ENCODE measurements at regions of chr5 and their contacts with region 1.

Region 1: DNA sequence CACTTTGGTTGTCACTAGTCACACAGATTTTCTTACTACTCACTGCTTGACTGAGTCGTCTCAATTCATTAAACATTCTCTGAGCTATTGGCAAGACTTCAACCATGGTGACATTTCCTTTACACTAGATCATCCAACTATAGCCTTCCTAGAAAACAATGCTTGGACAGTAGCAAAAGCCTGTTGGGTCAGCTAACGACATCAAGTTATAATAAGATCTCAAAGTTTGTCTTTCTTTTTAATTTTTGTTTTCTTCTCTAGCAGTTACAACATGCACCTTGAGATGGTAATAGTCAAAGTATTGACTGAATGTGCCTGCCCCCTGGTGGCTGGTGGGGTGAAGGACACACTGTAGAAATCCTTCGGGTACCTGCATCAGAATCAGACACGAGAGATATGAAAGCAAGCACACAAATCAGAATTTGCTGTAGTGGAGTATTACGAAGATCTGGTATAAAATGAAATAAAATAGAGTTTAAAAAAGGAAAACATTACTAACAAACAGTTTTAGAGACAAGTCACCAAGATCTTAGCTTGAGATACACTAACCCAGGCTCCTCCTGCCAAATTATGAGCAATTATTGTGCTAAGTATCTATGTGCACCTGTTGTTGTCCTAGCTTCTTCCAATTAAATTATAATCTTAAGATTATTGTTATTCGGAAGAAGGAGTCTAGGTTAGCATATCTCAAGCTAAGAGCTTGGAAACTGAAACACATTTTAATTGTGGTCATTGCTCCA is 81.2 kb downstream of the ARL15 start:
- DNase-seq: no peak
- H3K4me3 ChIP-seq: no peak overlapping the region
- CTCF ChIP-seq: peak; percentile 86

Region 2: GRCh38 chr5:53114988-53115387 is 1114.2 kb before region 1 on chr5:
- CTCF ChIA-PET with region 1: interaction called, 12 read pairs
- POLR2A ChIA-PET with region 1: no interaction called
- DNase-seq: no peak
- H3K4me3 ChIP-seq: no peak overlapping the region
- CTCF ChIP-seq: peak; percentile 12

Region 3: DNA sequence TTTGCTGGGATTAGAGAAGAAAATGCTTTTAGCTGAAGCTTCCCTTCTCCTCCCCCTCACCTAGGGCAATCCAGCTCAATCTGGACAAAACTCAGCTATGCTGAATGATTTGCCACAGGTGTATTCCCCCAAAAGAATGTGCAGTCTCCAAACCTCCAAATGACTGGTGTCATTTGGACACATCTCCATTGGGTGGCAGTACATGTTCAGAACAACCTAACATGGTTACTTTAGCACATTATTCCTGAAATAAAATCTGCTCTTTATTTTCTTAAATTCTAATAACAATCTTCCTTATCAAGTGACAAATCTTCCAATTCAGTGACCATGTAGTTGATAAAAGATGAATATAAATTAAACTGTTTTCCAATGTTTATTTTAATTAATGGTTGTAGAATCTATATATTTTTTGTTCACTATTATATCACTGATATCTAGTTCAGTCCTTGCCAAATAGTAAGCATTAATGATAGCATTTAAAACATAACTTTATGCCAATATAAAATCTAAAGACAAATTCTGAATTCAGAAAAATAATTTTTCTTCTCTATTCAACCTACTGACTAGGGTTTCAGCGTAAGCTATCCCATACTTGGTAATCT is 1058.4 kb before region 1 on chr5:
- CTCF ChIA-PET with region 1: interaction called, 60 read pairs
- POLR2A ChIA-PET with region 1: no interaction called
- DNase-seq: no peak
- H3K4me3 ChIP-seq: no peak overlapping the region
- CTCF ChIP-seq: peak; percentile 60

Region 4: DNA sequence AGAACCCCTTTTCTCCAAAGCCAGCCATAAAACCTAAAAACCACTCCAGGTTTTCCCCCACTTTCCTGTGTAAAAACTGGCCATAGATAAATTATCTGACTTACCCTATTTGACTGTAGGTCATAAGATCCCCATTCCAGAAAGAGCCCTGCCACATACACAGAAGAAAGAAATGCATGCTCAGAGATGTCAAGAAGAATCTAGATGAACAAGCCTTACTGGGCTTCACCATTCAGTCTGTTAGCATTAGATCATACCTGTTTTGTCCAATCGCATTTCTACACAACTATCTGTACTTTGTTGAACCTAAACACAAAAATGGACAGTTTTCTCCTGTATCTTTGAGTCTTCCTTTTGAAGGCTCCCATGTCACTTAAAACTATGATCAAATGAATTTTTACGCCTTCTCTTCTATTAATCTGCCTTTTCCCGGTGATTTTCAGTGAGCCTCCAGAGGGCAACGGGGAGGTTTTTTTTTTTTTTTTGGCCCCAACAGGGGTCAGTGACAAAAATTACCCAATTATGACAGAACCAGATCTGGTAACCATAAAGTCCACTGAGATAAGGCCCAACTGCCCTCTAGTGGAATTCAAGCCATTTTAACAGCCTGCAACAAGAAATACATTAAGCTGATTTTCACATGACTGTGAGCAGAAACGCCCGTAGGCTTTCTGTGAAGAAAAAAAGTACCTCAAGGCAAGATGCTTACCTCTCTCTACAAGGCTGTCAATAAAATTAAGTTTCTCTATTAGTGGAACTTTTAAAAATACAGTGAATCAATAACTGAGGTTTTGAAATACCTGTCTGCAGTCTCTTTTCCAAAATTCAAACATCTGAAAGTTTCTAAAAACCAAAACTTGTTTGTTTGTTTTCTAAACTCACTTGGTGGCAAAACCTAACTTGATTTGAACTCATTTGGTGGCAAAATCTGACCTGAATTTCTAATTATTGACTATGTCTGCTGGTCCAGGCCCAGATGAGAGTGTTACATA is 798.7 kb before region 1 on chr5:
- CTCF ChIA-PET with region 1: interaction called, 12 read pairs
- POLR2A ChIA-PET with region 1: no interaction called
- DNase-seq: no peak
- H3K4me3 ChIP-seq: no peak overlapping the region
- CTCF ChIP-seq: peak; percentile 50

Region 5: GRCh38 chr5:54215233-54215736 is 13.9 kb before region 1 on chr5:
- CTCF ChIA-PET with region 1: interaction called, 15 read pairs
- POLR2A ChIA-PET with region 1: no interaction called
- DNase-seq: no peak
- H3K4me3 ChIP-seq: no peak overlapping the region
- CTCF ChIP-seq: no peak